Heart left ventricle (tissue), 16 donors: ENCODE measurements at regions of chr11 and their contacts with region 1.

Region 1: GRCh38 chr11:67099831-67100324 is 19.2 kb upstream of the KDM2A start:
- DNase-seq: no peak
- ATAC-seq: no peak
- H3K4me3 ChIP-seq: no peak overlapping the region
- H3K27ac ChIP-seq: no peak overlapping the region
- H3K4me1 ChIP-seq: peaks cover 0 to 4% (median 0%) of the 10 kb centered on the region in 12 donors
- H3K27me3 ChIP-seq: no peaks in the 10 kb centered on the region
- CTCF ChIP-seq: no peak
- POLR2A ChIP-seq: no peak

Region 2: GRCh38 chr11:66222358-66223149 is 877.3 kb before region 1 on chr11:
- intact Hi-C with region 1: no loop called
- DNase-seq: peak; percentile 86 to 92 (median 89)
- ATAC-seq: peak; percentile 74 to 90 (median 86)
- H3K4me3 ChIP-seq: peak overlapping the region in 1 of 12 donors; percentile 16
- H3K27ac ChIP-seq: no peak overlapping the region
- H3K4me1 ChIP-seq: peaks cover 0 to 7% (median 0%) of the 10 kb centered on the region in 12 donors
- H3K27me3 ChIP-seq: no peaks in the 10 kb centered on the region
- CTCF ChIP-seq: peak; percentile 98 to 100 (median 99)
- POLR2A ChIP-seq: no peak

Region 3: DNA sequence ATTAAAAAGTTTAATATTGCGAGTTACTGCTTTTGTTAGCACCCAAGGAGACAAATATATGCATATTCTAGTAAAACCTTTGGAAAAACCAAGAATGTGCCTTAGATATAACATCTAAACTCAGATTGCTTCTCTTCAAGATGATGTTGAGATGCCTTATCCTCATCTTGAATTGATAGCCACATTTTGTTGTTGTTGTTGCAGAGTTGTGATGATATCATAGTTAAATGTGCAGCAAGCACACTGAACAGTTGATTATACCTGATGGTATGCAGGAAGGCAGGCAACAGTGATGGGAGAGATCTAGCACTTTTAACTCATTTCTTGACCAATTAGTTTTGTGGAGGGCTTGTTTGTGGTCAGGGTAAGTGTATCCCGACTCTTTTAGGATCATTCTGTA is 67.2 kb after region 1 on chr11:
- intact Hi-C with region 1: loop called in 1 of 10 experiments (anchors 5 kb)
- DNase-seq: no peak
- ATAC-seq: no peak
- H3K4me3 ChIP-seq: no peak overlapping the region
- H3K27ac ChIP-seq: no peak overlapping the region
- H3K4me1 ChIP-seq: peaks cover 0 to 32% (median 11%) of the 10 kb centered on the region in 12 donors
- H3K27me3 ChIP-seq: no peaks in the 10 kb centered on the region
- CTCF ChIP-seq: no peak
- POLR2A ChIP-seq: no peak